WTC11 (cell line): ENCODE measurements at regions of chr15 and their contacts with region 1.

Region 1: GRCh38 chr15:62549345-62549970 is 384.4 kb upstream of the C2CD4B start:
- DNase-seq: peak; percentile 54
- ATAC-seq: peak; percentile 82
- H3K4me3 Mint-ChIP-seq: no peak overlapping the region
- H3K27ac Mint-ChIP-seq: no peak overlapping the region; the same call in 1 of the 2 replicates
- H3K4me1 Mint-ChIP-seq: peaks cover 12% of the 10 kb centered on the region
- H3K27me3 Mint-ChIP-seq: no peaks in the 10 kb centered on the region
- CTCF ChIP-seq: peak; percentile 31

Region 2: DNA sequence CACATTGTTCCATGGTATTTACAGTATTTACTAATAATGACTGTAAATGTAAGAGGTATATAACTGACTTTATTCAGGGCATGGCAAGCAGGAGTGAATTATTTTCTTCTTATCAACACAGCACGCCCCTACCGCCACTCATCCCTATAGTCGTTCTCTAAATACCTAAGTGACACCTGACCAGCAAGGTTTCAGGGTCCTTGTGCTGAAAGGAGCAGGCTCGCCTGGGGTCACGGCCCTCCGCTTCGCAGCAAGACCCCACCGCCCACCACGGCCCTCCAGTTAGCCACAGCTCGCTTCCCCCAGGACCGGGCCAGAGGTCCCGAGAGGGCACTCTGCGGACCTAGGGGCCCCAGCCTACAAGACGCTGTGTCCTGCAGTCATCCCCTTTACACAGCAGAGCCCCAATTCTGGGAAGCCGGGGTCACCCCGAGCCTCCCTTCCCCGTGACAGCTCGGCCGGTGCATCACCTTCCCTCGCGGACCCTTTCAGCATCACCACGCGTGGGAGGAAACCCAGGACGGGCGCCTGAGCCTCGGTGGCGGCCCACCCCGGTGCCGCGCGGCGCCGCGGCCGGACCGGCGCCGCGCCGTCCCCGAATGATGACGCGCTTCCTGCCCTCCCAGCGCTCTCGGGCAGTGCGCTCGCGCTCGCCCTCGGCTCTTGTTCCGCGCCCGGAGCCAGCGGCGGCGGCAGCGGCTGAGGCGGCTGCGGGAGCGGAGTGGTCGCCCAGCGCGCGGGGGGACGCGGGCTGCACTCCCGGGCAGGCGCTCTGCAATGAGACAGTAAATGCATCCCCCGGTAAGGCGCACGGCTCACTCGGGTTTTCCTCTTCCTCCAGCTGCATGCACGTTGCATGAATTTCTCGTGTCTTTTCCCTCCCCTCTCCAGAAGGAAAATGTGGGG is 159.3 kb before region 1 on chr15:
- CTCF ChIA-PET with region 1: interaction called, 12 read pairs
- POLR2A ChIA-PET with region 1: no interaction called
- DNase-seq: peak; percentile 65
- ATAC-seq: peak; percentile 72
- H3K4me3 Mint-ChIP-seq: peak within 1 kb of the TSS; percentile 95
- H3K27ac Mint-ChIP-seq: peak within 1 kb of the TSS; percentile 90
- H3K4me1 Mint-ChIP-seq: peaks cover 22% of the 10 kb centered on the region
- H3K27me3 Mint-ChIP-seq: peaks cover 12% of the 10 kb centered on the region
- CTCF ChIP-seq: no peak

Region 3: DNA sequence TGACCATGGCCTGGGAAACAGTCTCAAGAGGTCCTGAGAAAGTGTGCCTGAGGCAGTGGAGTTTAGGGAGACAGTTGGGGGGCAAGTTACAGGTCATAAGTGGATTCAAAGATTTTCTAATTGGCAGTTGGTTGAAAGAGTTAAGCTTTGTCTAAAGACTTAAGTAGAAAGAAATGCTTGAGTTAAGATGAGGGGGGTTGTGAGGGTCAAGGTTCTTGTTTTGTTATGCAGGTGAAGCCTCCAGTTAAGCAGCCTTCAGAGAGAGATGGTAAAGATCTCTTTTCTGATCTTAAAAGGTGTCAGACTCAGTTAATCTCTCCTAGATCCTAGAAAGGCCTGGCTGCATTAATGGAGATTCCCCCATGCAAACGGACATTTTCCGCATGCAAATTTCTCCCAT is 28.1 kb before region 1 on chr15:
- CTCF ChIA-PET with region 1: interaction called, 11 read pairs
- POLR2A ChIA-PET with region 1: no interaction called
- DNase-seq: no peak
- ATAC-seq: peak; percentile 72
- H3K4me3 Mint-ChIP-seq: peak overlapping the region; percentile 7
- H3K27ac Mint-ChIP-seq: peak overlapping the region; percentile 83
- H3K4me1 Mint-ChIP-seq: peaks cover 61% of the 10 kb centered on the region
- H3K27me3 Mint-ChIP-seq: no peaks in the 10 kb centered on the region
- CTCF ChIP-seq: no peak

Region 4: GRCh38 chr15:62533687-62534086 is 15.8 kb before region 1 on chr15:
- CTCF ChIA-PET with region 1: interaction called, 15 read pairs
- POLR2A ChIA-PET with region 1: no interaction called
- DNase-seq: no peak
- ATAC-seq: peak; percentile 77
- H3K4me3 Mint-ChIP-seq: no peak overlapping the region
- H3K27ac Mint-ChIP-seq: peak overlapping the region; percentile 4; the same call in 1 of the 2 replicates
- H3K4me1 Mint-ChIP-seq: peaks cover 23% of the 10 kb centered on the region
- H3K27me3 Mint-ChIP-seq: no peaks in the 10 kb centered on the region
- CTCF ChIP-seq: no peak

Region 5: GRCh38 chr15:62572797-62573196 is 23.3 kb after region 1 on chr15:
- CTCF ChIA-PET with region 1: interaction called, 17 read pairs
- POLR2A ChIA-PET with region 1: no interaction called
- DNase-seq: peak; percentile 54
- ATAC-seq: peak; percentile 98
- H3K4me3 Mint-ChIP-seq: no peak overlapping the region
- H3K27ac Mint-ChIP-seq: peak overlapping the region; percentile 90
- H3K4me1 Mint-ChIP-seq: peaks cover 18% of the 10 kb centered on the region
- H3K27me3 Mint-ChIP-seq: no peaks in the 10 kb centered on the region
- CTCF ChIP-seq: no peak